ENCODE measurements at regions of chr1 and their contacts with region 1.

Region 1: DNA sequence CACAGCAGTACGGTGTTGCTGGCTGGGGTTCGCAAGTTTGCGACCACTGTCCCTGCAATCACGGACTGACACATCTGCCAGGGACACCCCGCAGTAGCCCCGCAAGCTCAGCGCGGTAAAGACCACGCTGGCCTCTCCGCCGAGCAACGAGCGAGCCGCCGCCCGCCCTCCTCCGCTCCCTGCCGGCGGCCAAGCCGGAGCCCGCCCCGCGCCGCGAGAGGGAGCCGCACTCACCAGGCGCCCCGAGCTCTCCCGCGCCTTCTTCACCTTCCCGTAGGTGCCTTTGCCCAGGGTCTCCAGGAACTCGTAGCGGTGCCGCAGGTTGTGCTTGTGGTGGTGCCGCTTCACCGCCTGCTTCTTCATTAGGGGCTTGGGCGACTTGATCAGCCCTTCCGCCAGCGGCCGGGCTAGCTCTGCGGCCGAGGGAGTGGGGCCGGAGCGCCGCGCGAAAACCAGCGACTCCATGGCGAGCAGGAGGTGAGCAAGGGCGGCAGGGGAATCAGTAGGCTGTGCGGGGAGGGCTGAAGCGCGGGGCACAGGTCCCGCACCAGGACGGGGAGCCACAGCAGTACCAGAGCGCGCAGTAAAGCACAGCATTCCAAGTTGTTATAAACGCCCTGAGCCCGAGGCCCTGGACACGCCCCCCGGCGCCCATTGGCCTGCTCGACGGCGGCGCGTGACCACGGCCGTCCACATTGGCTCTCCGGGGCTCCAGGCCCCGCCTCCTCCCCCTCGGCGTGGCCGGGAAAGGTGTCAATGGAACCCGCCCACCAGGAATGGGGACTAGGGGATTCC is at the start of gene NUAK2:
- DNase-seq: peak; percentile 68 to 93 (median 86)
- ATAC-seq: peak; percentile 88
- H3K4me3 ChIP-seq: peak within 1 kb of the TSS; percentile 78
- H3K4me3 Mint-ChIP-seq: peak within 1 kb of the TSS; percentile 98
- H3K27ac ChIP-seq: peak within 1 kb of the TSS in 1 of 2 donors; percentile 87
- H3K27ac Mint-ChIP-seq: peak within 1 kb of the TSS; percentile 99
- H3K4me1 ChIP-seq: peaks cover 67% of the 10 kb centered on the region
- H3K4me1 Mint-ChIP-seq: peaks cover 71% of the 10 kb centered on the region
- H3K27me3 ChIP-seq: no peaks in the 10 kb centered on the region
- H3K27me3 Mint-ChIP-seq: no peaks in the 10 kb centered on the region
- CTCF ChIP-seq: peak; percentile 44
- total RNA-seq, gene NUAK2: 14.9 to 15.3 TPM

Region 2: GRCh38 chr1:205111354-205111753 is 210.0 kb before region 1 on chr1:
- CTCF ChIA-PET with region 1: no interaction called
- POLR2A ChIA-PET with region 1: no interaction called
- intact Hi-C with region 1: no loop called
- DNase-seq: no peak
- ATAC-seq: no peak
- H3K4me3 ChIP-seq: no peak overlapping the region
- H3K4me3 Mint-ChIP-seq: no peak overlapping the region
- H3K27ac ChIP-seq: no peak overlapping the region
- H3K27ac Mint-ChIP-seq: no peak overlapping the region
- H3K4me1 ChIP-seq: no peaks in the 10 kb centered on the region
- H3K4me1 Mint-ChIP-seq: peaks cover 18% of the 10 kb centered on the region
- H3K27me3 ChIP-seq: no peaks in the 10 kb centered on the region
- H3K27me3 Mint-ChIP-seq: no peaks in the 10 kb centered on the region
- CTCF ChIP-seq: no peak

Region 3: GRCh38 chr1:205211169-205211838 is 110.1 kb before region 1 on chr1 and contains the start of gene DSTYK:
- CTCF ChIA-PET with region 1: no interaction called
- POLR2A ChIA-PET with region 1: interaction called, 3 read pairs
- intact Hi-C with region 1: loop called in 1 of 2 experiments (anchors 5 kb)
- DNase-seq: peak; percentile 84 to 95 (median 88)
- ATAC-seq: peak; percentile 92
- H3K4me3 ChIP-seq: peak within 1 kb of the TSS; percentile 99
- H3K4me3 Mint-ChIP-seq: peak within 1 kb of the TSS; percentile 98
- H3K27ac ChIP-seq: peak within 1 kb of the TSS; percentile 67 to 80
- H3K27ac Mint-ChIP-seq: peak within 1 kb of the TSS; percentile 98
- H3K4me1 ChIP-seq: peaks cover 19% of the 10 kb centered on the region
- H3K4me1 Mint-ChIP-seq: peaks cover 57% of the 10 kb centered on the region
- H3K27me3 ChIP-seq: no peaks in the 10 kb centered on the region
- H3K27me3 Mint-ChIP-seq: peaks cover 5% of the 10 kb centered on the region
- CTCF ChIP-seq: no peak
- total RNA-seq, gene DSTYK: 13.9 to 15.3 TPM

Region 4: DNA sequence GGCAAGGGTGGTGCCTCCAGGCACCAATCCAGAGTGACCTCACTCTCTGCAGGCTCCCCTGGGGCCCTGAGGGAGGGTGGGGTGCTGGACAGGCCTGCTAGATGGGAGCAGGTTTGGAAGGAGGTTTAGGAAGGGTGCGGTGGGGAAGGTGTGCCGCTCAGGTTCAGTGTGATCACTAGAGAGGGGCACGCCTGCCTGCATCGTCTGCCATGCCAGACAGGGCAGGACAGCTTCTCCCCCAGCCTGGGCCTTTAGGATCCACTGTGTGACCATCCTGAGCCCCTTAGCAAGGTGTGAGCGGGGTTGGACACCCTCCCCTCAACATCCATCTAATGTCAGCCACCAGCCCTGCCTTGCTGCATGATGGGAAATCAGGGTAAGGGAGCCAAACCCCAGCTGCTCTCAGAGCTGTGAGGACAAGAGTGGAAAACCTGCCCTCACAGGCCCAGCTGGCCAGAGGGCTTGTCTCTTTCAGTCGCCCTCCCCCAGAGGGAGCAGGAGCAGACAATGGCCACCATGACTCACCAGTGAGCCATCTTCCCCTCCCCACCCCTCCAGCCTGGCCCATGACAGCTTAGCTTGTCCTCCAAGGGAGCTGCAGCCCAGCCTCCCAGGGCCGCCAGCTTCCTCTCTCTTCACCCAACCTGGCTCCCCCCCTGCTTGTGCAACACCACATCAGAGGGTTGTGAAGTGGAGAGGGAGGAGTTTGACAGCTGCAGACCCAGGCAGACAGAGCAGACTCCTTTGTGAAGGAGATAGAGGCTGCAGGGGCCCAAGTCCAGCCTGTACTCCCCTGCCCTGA is 36.8 kb before region 1 on chr1:
- CTCF ChIA-PET with region 1: interaction called, 322 read pairs
- POLR2A ChIA-PET with region 1: interaction called, 918 read pairs
- intact Hi-C with region 1: loop called (anchors 1 kb)
- DNase-seq: peak; percentile 73 to 97 (median 93)
- ATAC-seq: peak; percentile 66
- H3K4me3 ChIP-seq: peak overlapping the region; percentile 50
- H3K4me3 Mint-ChIP-seq: peak overlapping the region; percentile 82
- H3K27ac ChIP-seq: peak overlapping the region; percentile 72 to 90
- H3K27ac Mint-ChIP-seq: peak overlapping the region; percentile 97
- H3K4me1 ChIP-seq: peaks cover 92% of the 10 kb centered on the region
- H3K4me1 Mint-ChIP-seq: peaks cover 81% of the 10 kb centered on the region
- H3K27me3 ChIP-seq: no peaks in the 10 kb centered on the region
- H3K27me3 Mint-ChIP-seq: no peaks in the 10 kb centered on the region
- CTCF ChIP-seq: no peak

Region 5: GRCh38 chr1:205300886-205301821 is 20.2 kb before region 1 on chr1:
- CTCF ChIA-PET with region 1: interaction called, 7 read pairs
- POLR2A ChIA-PET with region 1: interaction called, 21 read pairs
- intact Hi-C with region 1: loop called in 1 of 2 experiments (anchors 2 kb)
- DNase-seq: no peak
- ATAC-seq: no peak
- H3K4me3 ChIP-seq: no peak overlapping the region
- H3K4me3 Mint-ChIP-seq: no peak overlapping the region
- H3K27ac ChIP-seq: peak overlapping the region in 1 of 2 donors; percentile 7
- H3K27ac Mint-ChIP-seq: peak overlapping the region; percentile 67
- H3K4me1 ChIP-seq: peaks cover 32% of the 10 kb centered on the region
- H3K4me1 Mint-ChIP-seq: peaks cover 60% of the 10 kb centered on the region
- H3K27me3 ChIP-seq: no peaks in the 10 kb centered on the region
- H3K27me3 Mint-ChIP-seq: no peaks in the 10 kb centered on the region
- CTCF ChIP-seq: no peak

Region 6: GRCh38 chr1:205306929-205307566 is 14.3 kb before region 1 on chr1:
- CTCF ChIA-PET with region 1: interaction called, 3 read pairs
- POLR2A ChIA-PET with region 1: interaction called, 4 read pairs
- intact Hi-C with region 1: loop called in 1 of 2 experiments (anchors 2 kb)
- DNase-seq: no peak
- ATAC-seq: no peak
- H3K4me3 ChIP-seq: no peak overlapping the region
- H3K4me3 Mint-ChIP-seq: no peak overlapping the region
- H3K27ac ChIP-seq: peak overlapping the region in 1 of 2 donors; percentile 40
- H3K27ac Mint-ChIP-seq: peak overlapping the region; percentile 68
- H3K4me1 ChIP-seq: peaks cover 60% of the 10 kb centered on the region
- H3K4me1 Mint-ChIP-seq: peaks cover 55% of the 10 kb centered on the region
- H3K27me3 ChIP-seq: no peaks in the 10 kb centered on the region
- H3K27me3 Mint-ChIP-seq: no peaks in the 10 kb centered on the region
- CTCF ChIP-seq: no peak

Region 7: GRCh38 chr1:205354259-205354904 is 33.0 kb after region 1 on chr1:
- CTCF ChIA-PET with region 1: interaction called, 15 read pairs
- POLR2A ChIA-PET with region 1: no interaction called
- intact Hi-C with region 1: no loop called
- DNase-seq: peak; percentile 34 to 82 (median 52)
- ATAC-seq: peak; percentile 83
- H3K4me3 ChIP-seq: no peak overlapping the region
- H3K4me3 Mint-ChIP-seq: no peak overlapping the region
- H3K27ac ChIP-seq: no peak overlapping the region
- H3K27ac Mint-ChIP-seq: no peak overlapping the region
- H3K4me1 ChIP-seq: no peaks in the 10 kb centered on the region
- H3K4me1 Mint-ChIP-seq: no peaks in the 10 kb centered on the region
- H3K27me3 ChIP-seq: peaks cover 6 to 11% of the 10 kb centered on the region in 2 experiments
- H3K27me3 Mint-ChIP-seq: peaks cover 16% of the 10 kb centered on the region
- CTCF ChIP-seq: peak; percentile 95

Measured in CD4-positive, alpha-beta T cell (primary cell).